B cell (primary cell): ENCODE measurements at regions of chr22 and their contacts with region 1.

Region 1: DNA sequence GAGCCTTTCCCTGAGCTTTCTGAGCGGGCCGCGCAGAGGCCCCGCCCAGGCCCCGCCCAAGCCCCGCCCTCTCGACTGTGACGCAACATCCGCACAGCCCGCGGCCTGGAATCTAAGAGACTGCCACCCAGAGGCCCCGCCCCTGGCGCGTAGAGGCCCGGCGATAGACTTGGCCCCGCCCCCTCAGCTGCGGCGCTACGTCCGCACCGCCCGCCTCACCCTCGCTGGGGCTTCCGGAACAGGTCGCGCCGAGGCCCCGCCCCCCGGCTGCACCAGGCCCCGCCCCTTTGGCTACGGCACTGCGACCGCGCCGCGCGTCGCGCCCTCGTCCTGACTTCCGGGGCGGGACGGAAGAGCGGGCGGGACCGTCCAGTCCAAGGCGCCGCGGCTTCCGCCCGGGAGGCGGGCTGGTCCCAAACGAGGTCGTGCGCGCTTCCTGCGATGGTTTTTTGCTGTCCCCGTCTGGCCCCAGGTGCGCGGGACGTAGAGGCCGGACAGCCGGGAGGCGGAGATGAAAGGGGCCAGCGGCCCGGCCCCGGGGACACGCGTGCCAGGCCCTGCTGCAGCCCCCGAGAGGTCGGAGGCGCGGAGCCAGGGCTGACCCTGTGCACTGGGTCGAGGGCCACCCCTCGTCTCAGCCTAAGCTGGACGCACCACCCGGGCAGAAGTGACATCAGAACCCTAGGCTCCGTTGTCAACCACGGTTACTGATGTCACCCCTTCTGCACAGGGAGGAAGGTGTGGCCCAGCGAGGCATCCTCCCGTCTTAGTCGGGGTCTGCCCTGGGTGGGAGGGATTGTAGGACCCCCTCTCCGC is 59.0 kb upstream of the WNT7B start:
- DNase-seq: peak; percentile 100
- ATAC-seq: peak; percentile 92
- H3K4me3 ChIP-seq: peak overlapping the region; percentile 47 to 94 (median 87)
- H3K4me3 Mint-ChIP-seq: peak overlapping the region; percentile 87
- H3K27ac ChIP-seq: peak overlapping the region; percentile 90
- H3K27ac Mint-ChIP-seq: peak overlapping the region; percentile 95
- H3K4me1 ChIP-seq: peaks cover 15 to 16% of the 10 kb centered on the region in 2 donors
- H3K4me1 Mint-ChIP-seq: peaks cover 18% of the 10 kb centered on the region
- H3K27me3 ChIP-seq: no peaks in the 10 kb centered on the region
- H3K27me3 Mint-ChIP-seq: no peaks in the 10 kb centered on the region
- CTCF ChIP-seq: no peak

Region 2: DNA sequence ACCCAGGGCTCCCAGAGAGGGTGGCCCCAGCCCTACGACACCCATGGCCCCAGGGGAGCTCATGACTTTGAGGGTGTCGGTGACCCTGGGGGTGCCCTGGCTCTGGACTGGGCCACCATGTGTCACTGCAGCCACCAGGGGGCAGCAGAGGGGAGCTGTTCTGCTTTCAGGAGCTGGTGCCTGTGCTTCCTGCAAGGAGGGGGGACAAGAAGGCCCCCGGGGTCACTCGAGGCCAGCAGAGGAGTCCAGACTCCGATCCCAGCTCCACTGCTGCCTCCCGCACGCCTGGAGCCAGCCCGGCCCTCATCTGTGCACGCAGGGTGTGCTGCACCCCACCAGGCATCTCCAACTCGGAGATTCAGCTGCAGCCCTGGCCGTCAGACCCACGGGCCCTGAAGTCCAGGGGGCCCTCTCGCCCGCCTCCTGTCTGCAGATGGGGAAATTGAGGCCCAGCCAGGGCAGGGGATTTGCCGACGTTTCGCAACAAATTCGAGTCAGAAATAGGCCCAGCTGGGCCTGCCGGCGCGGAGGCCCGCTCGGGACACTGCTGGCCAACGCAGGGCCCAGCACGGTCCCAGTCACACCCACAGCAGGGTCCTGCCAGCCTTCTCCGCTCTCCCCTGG is 29.5 kb before region 1 on chr22:
- CTCF ChIA-PET with region 1: interaction called, 48 read pairs
- POLR2A ChIA-PET with region 1: interaction called, 10 read pairs
- intact Hi-C with region 1: no loop called
- DNase-seq: peak; percentile 88
- ATAC-seq: peak; percentile 90
- H3K4me3 ChIP-seq: no peak overlapping the region
- H3K4me3 Mint-ChIP-seq: no peak overlapping the region
- H3K27ac ChIP-seq: no peak overlapping the region
- H3K27ac Mint-ChIP-seq: no peak overlapping the region
- H3K4me1 ChIP-seq: peaks cover 3 to 10% of the 10 kb centered on the region in 2 donors
- H3K4me1 Mint-ChIP-seq: peaks cover 6% of the 10 kb centered on the region
- H3K27me3 ChIP-seq: peaks cover 0 to 13% (median 0%) of the 10 kb centered on the region in 4 experiments
- H3K27me3 Mint-ChIP-seq: no peaks in the 10 kb centered on the region
- CTCF ChIP-seq: peak; percentile 90

Region 3: GRCh38 chr22:46013460-46014416 is 22.2 kb before region 1 on chr22:
- CTCF ChIA-PET with region 1: interaction called, 48 read pairs
- POLR2A ChIA-PET with region 1: interaction called, 15 read pairs
- intact Hi-C with region 1: loop called (anchors 1 kb)
- DNase-seq: peak; percentile 81
- ATAC-seq: peak; percentile 95
- H3K4me3 ChIP-seq: peak overlapping the region; percentile 8 to 88 (median 83)
- H3K4me3 Mint-ChIP-seq: peak overlapping the region; percentile 93
- H3K27ac ChIP-seq: peak overlapping the region; percentile 90 to 91
- H3K27ac Mint-ChIP-seq: peak overlapping the region; percentile 92
- H3K4me1 ChIP-seq: peaks cover 3 to 17% of the 10 kb centered on the region in 2 donors
- H3K4me1 Mint-ChIP-seq: peaks cover 10% of the 10 kb centered on the region
- H3K27me3 ChIP-seq: peaks cover 0 to 3% (median 0%) of the 10 kb centered on the region in 4 experiments
- H3K27me3 Mint-ChIP-seq: no peaks in the 10 kb centered on the region
- CTCF ChIP-seq: peak; percentile 75

Region 4: DNA sequence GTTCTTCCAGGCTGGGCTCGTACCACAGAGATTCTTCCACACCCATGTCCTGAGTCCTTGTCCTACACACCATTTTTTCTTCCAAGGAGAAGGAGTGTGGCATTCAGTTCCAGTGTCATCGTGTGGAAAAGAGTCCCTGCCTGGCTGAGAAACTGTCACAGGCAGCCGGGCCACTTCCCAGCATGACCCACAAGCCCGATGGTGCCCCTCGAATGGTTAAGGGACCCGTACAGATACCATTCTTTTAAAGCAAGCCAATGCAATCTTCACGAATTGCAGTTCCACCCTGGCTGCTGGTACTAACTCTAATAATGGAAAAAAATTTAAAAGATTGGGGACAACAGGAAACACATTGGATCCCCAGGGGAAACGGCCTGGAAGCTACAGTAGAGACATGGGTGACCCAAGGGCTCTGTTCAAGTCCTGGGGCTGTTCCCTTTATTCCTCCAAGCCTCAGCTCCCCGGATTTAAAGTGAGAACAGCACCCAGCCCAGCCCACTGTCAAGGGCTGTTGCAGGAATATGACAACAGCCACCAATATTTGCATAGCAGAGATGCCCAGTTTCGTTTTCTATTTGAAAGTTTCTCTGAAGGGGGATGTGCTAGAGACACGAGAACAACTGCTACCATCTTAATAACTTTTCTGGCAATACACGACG is 21.9 kb after region 1 on chr22:
- CTCF ChIA-PET with region 1: interaction called, 7 read pairs
- POLR2A ChIA-PET with region 1: interaction called, 55 read pairs
- intact Hi-C with region 1: loop called (anchors 1 kb)
- DNase-seq: peak; percentile 83
- ATAC-seq: peak; percentile 70
- H3K4me3 ChIP-seq: peak overlapping the region in 2 of 5 experiments; percentile 18 to 28
- H3K4me3 Mint-ChIP-seq: peak overlapping the region; percentile 62
- H3K27ac ChIP-seq: peak overlapping the region; percentile 57 to 89
- H3K27ac Mint-ChIP-seq: peak overlapping the region; percentile 97
- H3K4me1 ChIP-seq: peaks cover 31 to 49% of the 10 kb centered on the region in 2 donors
- H3K4me1 Mint-ChIP-seq: peaks cover 51% of the 10 kb centered on the region
- H3K27me3 ChIP-seq: no peaks in the 10 kb centered on the region
- H3K27me3 Mint-ChIP-seq: no peaks in the 10 kb centered on the region
- CTCF ChIP-seq: no peak

Region 5: GRCh38 chr22:46071451-46072109 is 35.6 kb after region 1 on chr22:
- CTCF ChIA-PET with region 1: interaction called, 3 read pairs
- POLR2A ChIA-PET with region 1: interaction called, 14 read pairs
- intact Hi-C with region 1: no loop called
- DNase-seq: peak; percentile 72
- ATAC-seq: peak; percentile 7
- H3K4me3 ChIP-seq: peak overlapping the region in 4 of 5 experiments; percentile 31 to 70 (median 66)
- H3K4me3 Mint-ChIP-seq: peak overlapping the region; percentile 89
- H3K27ac ChIP-seq: no peak overlapping the region
- H3K27ac Mint-ChIP-seq: peak overlapping the region; percentile 81
- H3K4me1 ChIP-seq: peaks cover 22 to 29% of the 10 kb centered on the region in 2 donors
- H3K4me1 Mint-ChIP-seq: peaks cover 32% of the 10 kb centered on the region
- H3K27me3 ChIP-seq: peaks cover 0 to 2% (median 0%) of the 10 kb centered on the region in 4 experiments
- H3K27me3 Mint-ChIP-seq: peaks cover 4% of the 10 kb centered on the region
- CTCF ChIP-seq: no peak

Region 6: GRCh38 chr22:46087336-46088277 is 51.7 kb after region 1 on chr22:
- CTCF ChIA-PET with region 1: no interaction called
- POLR2A ChIA-PET with region 1: no interaction called
- intact Hi-C with region 1: no loop called
- DNase-seq: no peak
- ATAC-seq: no peak
- H3K4me3 ChIP-seq: no peak overlapping the region
- H3K4me3 Mint-ChIP-seq: no peak overlapping the region
- H3K27ac ChIP-seq: no peak overlapping the region
- H3K27ac Mint-ChIP-seq: no peak overlapping the region
- H3K4me1 ChIP-seq: no peaks in the 10 kb centered on the region
- H3K4me1 Mint-ChIP-seq: no peaks in the 10 kb centered on the region
- H3K27me3 ChIP-seq: no peaks in the 10 kb centered on the region
- H3K27me3 Mint-ChIP-seq: no peaks in the 10 kb centered on the region
- CTCF ChIP-seq: no peak